ENCODE measurements at regions of chr17 and their contacts with region 1.

Region 1: GRCh38 chr17:78289802-78290363 is 58.5 kb downstream of the TMEM235 start:
- DNase-seq: peak; percentile 76 to 93 (median 81)
- ATAC-seq: peak; percentile 99
- H3K4me3 ChIP-seq: no peak overlapping the region
- H3K27ac ChIP-seq: no peak overlapping the region; the same call in 2 of the 3 replicates
- H3K4me1 ChIP-seq: peaks cover 4 to 28% of the 10 kb centered on the region in 2 experiments; a peak in 4 of 5 replicates
- H3K27me3 ChIP-seq: no peaks in the 10 kb centered on the region
- CTCF ChIP-seq: peak; percentile 86 to 92 (median 89)
- EP300 ChIP-seq: no peak
- POLR2A ChIP-seq: no peak
- RAD21 ChIP-seq: peak; percentile 89 to 96

Region 2: DNA sequence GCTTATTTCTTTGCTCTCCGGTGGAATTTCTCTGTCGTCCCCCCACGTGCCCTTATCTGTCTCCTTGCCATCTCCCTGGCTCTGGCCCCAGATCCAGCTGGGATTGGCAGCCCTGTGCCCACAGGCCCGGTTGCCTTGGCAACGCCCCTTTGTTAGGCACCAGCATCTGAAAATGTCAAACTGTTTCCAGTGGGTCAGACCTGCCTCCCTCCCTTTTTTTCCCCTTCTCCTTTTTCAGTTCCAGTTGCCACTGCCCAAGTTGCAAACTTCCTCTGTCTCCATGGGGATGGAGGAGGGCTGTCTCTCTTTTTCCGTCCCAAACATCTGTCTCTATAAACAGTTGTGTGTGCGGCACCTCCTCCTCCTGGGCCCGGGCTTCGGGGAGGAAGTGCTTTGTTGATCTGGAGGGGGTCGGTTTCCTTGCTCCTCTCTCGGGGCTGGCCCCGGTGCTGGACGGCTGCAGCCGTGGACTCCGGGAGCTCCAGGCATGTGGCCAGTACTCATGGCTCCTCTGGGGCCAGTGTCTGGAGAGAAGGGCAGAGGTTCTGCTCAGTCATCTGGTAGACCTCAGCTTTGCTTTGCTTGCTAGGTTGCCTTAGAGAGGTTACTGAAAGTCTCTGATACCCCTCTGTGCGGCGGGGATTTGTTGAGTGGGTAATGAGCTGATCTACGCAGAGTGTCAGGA is 34.6 kb after region 1 on chr17:
- CTCF ChIA-PET with region 1: no interaction called
- POLR2A ChIA-PET with region 1: no interaction called
- in situ Hi-C with region 1: no loop called
- intact Hi-C with region 1: no loop called
- DNase-seq: no peak
- ATAC-seq: peak; percentile 25; the same call in 2 of the 3 replicates
- H3K4me3 ChIP-seq: no peak overlapping the region
- H3K27ac ChIP-seq: no peak overlapping the region
- H3K4me1 ChIP-seq: peaks cover 3 to 19% of the 10 kb centered on the region in 2 experiments; a peak in 4 of 5 replicates
- H3K27me3 ChIP-seq: no peaks in the 10 kb centered on the region
- CTCF ChIP-seq: no peak
- EP300 ChIP-seq: no peak
- POLR2A ChIP-seq: no peak
- RAD21 ChIP-seq: no peak

Region 3: GRCh38 chr17:78421484-78422266 is 131.8 kb after region 1 on chr17:
- CTCF ChIA-PET with region 1: interaction called, 11 read pairs
- POLR2A ChIA-PET with region 1: no interaction called
- in situ Hi-C with region 1: no loop called
- intact Hi-C with region 1: loop called (anchors 2 kb)
- DNase-seq: peak; percentile 86 to 95 (median 92)
- ATAC-seq: peak; percentile 97
- H3K4me3 ChIP-seq: no peak overlapping the region
- H3K27ac ChIP-seq: 0 out of 3 replicates have a peak overlapping the region, but pooled peaks have one; percentile 39
- H3K4me1 ChIP-seq: peaks cover 12 to 28% of the 10 kb centered on the region in 2 experiments
- H3K27me3 ChIP-seq: no peaks in the 10 kb centered on the region
- CTCF ChIP-seq: peak; percentile 98 to 100 (median 99)
- EP300 ChIP-seq: 0 out of 2 replicates have a peak, but pooled peaks have one; percentile 21
- POLR2A ChIP-seq: no peak
- RAD21 ChIP-seq: peak; percentile 93 to 96

Measured in K562 (cell line).